ENCODE measurements at regions of chr16 and their contacts with region 1.

Region 1: DNA sequence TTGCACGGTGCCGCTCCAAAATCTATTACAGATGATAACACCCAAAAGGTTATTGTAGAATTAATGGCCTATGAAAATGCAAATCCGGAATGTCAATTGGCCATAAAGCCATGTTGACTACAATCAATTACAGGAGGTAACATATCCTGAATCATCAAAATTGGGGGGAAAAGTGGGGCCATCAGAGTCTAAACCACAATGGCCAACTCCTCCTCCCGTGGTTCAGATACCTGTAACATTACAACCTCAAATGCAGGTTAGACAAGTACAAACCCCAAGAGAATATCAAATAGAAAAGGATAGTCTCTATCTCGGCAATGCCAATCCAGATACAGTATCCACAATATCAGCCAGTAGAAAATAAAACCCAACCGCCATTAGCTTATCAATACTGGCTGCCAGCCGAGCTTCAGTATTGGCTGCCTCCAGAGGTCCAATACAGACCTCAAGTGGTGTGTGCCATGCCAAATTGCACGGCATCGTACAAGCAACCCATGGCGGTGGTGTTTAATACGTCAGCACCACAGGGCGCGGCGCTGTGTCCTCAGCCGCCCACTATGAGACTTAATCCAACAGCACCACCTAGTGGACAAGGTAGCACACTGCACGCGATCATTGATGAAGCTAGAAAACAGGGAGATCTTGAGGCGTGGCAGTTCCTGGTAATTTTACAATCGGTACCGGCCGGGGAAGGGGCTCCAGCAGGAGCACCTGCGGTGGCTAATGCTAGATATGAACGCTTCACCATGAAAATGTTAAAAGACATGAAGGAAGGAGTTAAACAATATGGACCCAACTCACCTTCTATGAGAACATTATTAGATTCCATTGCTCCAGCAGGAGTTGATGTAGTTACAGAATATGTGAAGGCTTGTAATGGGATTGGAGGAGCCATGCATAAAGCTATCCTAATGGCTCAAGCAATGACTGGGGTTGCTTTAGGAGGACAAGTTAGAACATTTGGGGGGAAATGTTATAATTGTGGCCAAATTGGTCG is 15.2 kb downstream of the FLYWCH1 start:
- DNase-seq: no peak
- H3K4me3 ChIP-seq: peak overlapping the region; percentile 24
- CTCF ChIP-seq: peak; percentile 87

Region 2: GRCh38 chr16:2905431-2906387 is 21.2 kb before region 1 on chr16:
- CTCF ChIA-PET with region 1: interaction called, 45 read pairs
- POLR2A ChIA-PET with region 1: interaction called, 3 read pairs
- DNase-seq: peak; percentile 95
- H3K4me3 ChIP-seq: peak overlapping the region; percentile 78
- CTCF ChIP-seq: no peak

Region 3: DNA sequence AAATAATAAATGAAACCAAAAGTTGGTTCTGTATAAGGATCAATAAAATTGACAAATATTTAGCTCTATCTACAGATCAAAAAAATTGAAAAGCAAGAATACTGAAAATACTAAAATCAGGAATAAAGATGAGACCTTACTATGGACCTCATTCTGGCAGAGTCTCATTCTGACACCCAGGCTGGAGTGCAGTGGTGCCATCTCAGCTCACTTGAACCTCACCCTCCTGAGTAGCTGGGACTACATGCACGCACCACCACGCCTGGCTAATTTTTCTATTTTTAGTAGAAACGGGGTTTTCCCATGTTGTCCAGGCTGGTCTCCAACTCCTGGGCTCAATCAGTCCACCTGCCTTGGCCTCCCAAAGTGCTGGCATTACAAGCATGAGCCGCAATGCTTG is 15.1 kb after region 1 on chr16:
- CTCF ChIA-PET with region 1: interaction called, 58 read pairs
- POLR2A ChIA-PET with region 1: no interaction called
- DNase-seq: no peak
- H3K4me3 ChIP-seq: no peak overlapping the region
- CTCF ChIP-seq: no peak

Region 4: DNA sequence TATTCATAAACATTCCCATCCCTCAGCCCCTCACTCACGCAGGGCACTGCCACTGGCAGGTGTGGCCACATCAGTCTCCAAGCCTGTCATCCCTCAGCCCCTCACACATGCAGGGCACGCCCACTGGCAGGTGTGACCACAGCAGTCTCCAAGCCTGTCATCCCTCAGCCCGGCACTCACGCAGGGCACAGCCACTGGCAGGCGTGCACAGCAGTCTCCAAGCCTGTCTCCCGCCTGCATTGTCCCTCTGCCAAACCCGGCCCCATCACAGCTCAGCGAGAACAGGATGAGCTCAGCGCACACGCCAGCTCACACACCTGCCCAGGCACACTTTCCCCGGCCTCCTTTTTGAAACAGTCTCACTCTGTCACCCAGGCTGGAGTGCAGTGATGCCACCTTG is 25.7 kb after region 1 on chr16:
- CTCF ChIA-PET with region 1: interaction called, 30 read pairs
- POLR2A ChIA-PET with region 1: no interaction called
- DNase-seq: no peak
- H3K4me3 ChIP-seq: no peak overlapping the region
- CTCF ChIP-seq: no peak

Region 5: DNA sequence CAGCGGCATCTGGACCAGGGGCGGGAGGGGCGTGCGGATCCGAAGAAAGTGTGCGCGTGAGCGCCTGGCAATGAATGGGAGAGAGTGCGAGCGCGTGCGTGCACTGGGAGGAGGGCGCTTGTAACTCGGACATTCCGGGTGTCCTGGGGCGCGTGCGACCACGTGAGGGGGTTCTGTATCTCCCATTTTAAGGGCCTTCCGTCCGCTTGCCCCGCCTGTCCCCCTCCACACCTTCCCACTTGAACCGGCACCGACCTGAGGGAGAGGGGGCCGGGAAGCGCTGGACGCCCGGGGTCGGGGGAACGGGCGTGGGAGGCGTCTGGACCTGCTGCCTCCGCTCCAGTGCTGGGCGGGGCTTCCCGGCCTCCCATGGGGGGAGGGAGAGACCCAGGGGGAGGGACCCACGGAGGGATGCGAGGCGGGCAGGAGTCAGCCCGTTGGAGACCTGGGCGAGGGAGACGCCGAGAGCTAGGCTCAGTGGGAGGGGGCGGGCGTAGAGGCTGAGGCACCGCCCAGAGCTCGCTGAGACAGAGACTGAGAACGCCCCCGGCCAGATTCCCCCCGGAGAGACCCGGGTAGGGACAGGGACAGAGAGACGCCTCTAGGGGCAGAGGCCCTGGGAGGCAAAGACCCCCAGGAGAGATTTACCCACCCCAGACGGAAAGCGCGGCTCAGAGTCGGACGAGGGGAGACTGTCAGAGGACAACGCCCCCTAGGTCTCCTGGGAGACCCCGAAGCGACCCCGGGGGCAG is 37.0 kb after region 1 on chr16 and contains the start of gene KREMEN2:
- CTCF ChIA-PET with region 1: interaction called, 11 read pairs
- POLR2A ChIA-PET with region 1: no interaction called
- DNase-seq: no peak
- H3K4me3 ChIP-seq: peak within 1 kb of the TSS; percentile 37
- CTCF ChIP-seq: no peak

Region 6: DNA sequence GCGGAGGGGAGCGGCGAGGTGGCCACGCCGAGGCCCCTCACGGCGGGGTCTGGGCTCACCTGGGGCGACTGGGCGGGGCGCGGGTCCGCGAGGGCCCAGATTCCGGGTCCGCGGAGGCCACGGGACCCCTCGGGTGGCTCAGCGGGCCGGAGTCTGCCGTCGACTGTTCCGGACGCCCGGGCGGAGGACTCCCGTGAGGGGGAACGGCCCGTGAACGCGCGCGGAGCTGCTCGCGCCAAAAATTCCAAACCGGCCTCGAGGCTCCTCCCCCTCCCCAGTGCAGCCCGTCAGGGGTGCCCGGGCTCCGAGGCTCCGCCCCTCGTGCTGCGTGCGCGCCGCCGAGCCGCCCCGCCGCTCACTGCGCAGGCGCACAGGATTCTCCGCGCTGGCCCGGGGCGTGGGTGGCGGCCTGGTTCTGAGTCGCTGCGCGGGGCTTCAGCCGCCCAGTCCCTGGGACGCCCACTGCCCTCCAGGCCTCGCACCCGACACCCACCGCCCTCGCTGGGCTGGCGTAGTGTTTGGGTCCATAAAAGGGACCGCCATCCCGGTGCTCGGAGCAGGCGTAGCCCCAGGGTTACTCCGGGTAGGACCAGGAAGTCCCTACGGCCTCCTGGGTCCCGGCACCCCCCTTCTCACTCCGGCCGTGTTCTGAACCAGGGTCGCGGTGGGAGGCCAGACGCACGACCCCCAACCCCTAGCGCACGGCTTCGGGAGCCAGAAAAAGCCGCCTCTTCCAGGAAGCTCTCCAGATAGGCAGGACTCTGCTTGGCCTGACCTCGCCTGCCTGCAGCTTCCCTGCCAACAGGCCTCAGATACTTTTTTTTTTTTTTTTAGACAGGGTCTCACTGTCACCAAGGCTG is 53.5 kb after region 1 on chr16 and contains the start of gene PKMYT1:
- CTCF ChIA-PET with region 1: interaction called, 10 read pairs
- POLR2A ChIA-PET with region 1: no interaction called
- DNase-seq: no peak
- H3K4me3 ChIP-seq: peak within 1 kb of the TSS; percentile 86
- CTCF ChIP-seq: no peak

Measured in AG04449 (cell line).